ENCODE measurements at regions of chr11 and their contacts with region 1.

Region 1: GRCh38 chr11:13210424-13210823 is 67.2 kb upstream of the BMAL1 start:
- DNase-seq: peak; percentile 72
- H3K4me3 Mint-ChIP-seq: no peak overlapping the region
- H3K27ac Mint-ChIP-seq: no peak overlapping the region
- H3K4me1 Mint-ChIP-seq: peaks cover 32% of the 10 kb centered on the region
- H3K27me3 Mint-ChIP-seq: peaks cover 6% of the 10 kb centered on the region

Region 2: DNA sequence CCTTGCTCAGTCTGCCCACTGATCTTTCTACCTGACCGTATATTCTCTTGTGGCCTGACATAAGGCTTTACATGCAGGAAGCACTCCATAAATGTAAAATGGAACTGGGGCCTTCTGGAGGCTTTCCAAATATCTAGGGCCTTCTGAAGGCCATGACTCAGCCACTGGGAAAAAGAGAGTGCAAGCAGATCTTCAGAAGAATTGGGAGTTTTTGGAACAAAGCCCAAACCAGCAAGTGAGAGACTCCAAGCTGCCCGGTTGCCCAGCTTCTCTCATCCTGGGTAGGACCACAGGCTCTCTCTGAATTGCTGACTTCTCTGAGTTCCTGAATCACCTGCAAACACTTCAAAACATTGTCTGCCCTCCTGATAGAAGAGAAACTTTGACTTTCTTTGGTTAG is 40.7 kb before region 1 on chr11:
- intact Hi-C with region 1: no loop called
- DNase-seq: no peak
- H3K4me3 Mint-ChIP-seq: no peak overlapping the region
- H3K27ac Mint-ChIP-seq: no peak overlapping the region
- H3K4me1 Mint-ChIP-seq: no peaks in the 10 kb centered on the region
- H3K27me3 Mint-ChIP-seq: peaks cover 15% of the 10 kb centered on the region

Region 3: GRCh38 chr11:13183094-13183825 is 27.2 kb before region 1 on chr11:
- intact Hi-C with region 1: loop called (anchors 1 kb)
- DNase-seq: peak; percentile 63
- H3K4me3 Mint-ChIP-seq: peak overlapping the region; percentile 21
- H3K27ac Mint-ChIP-seq: no peak overlapping the region
- H3K4me1 Mint-ChIP-seq: peaks cover 9% of the 10 kb centered on the region
- H3K27me3 Mint-ChIP-seq: peaks cover 14% of the 10 kb centered on the region

Region 4: DNA sequence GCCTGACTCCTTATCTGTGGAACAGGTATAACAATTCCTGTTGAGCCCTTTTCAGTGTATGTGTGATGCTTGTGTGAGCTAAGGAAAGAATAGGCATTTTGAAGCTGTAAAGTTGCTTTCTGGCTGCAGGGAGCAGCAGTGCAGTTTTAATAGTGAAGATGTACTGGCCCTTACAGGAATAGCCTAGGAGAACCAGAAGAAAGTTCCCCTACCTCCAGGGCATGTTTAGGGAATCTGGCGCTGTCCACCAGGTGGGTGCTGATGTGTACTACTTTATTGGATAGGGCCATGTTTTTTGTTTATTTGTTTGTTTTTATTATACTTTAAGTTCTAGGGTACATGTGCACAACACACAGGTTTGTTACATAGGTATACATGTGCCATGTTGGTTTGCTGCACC is 78.7 kb after region 1 on chr11:
- intact Hi-C with region 1: loop called (anchors 1 kb)
- DNase-seq: no peak
- H3K4me3 Mint-ChIP-seq: no peak overlapping the region
- H3K27ac Mint-ChIP-seq: peak overlapping the region; percentile 91
- H3K4me1 Mint-ChIP-seq: peaks cover 58% of the 10 kb centered on the region
- H3K27me3 Mint-ChIP-seq: no peaks in the 10 kb centered on the region

Region 5: DNA sequence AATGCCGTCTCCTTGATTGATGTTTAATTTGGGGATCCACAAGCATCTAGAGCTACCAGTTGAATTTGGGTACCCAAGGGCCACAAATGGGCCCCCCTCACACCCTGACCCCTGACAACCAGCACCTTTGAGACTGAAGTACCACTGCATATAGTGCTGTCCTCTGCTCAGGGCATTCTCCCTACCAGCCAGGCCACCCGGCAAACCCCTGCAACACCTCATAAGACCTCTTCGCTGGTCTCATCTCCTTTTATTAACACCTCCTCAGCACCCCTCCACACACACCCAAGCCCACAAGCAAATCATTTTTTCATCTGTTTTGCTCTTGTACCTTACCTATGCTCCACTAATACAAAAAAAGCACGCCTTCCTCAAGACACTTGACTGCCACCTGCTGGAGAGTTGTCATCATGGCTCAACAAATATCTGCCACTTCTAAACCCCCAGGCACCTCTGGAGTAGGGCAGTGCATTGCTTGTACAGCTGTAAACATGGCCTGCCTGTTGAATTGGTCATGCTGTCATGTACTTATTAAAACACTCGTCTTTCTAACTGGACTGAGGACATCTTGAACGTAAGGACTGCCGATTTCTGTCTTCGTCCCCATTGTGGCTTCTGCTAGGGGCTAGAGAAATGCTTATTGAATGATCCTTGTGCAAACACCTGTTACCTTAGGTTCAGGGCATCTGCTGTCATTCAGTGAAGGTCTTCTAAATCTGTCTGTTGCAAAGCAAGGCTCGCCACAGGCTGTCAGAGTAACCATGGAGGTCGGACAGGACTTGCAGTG is 133.7 kb after region 1 on chr11:
- intact Hi-C with region 1: loop called (anchors 1 kb)
- DNase-seq: peak; percentile 92
- H3K4me3 Mint-ChIP-seq: no peak overlapping the region
- H3K27ac Mint-ChIP-seq: no peak overlapping the region
- H3K4me1 Mint-ChIP-seq: peaks cover 28% of the 10 kb centered on the region
- H3K27me3 Mint-ChIP-seq: no peaks in the 10 kb centered on the region

Region 6: GRCh38 chr11:13668102-13668956 is 457.9 kb after region 1 on chr11 and contains the start of gene FAR1:
- intact Hi-C with region 1: loop called (anchors 2 kb)
- DNase-seq: peak; percentile 99
- H3K4me3 Mint-ChIP-seq: peak within 1 kb of the TSS; percentile 98
- H3K27ac Mint-ChIP-seq: peak within 1 kb of the TSS; percentile 97
- H3K4me1 Mint-ChIP-seq: peaks cover 36% of the 10 kb centered on the region
- H3K27me3 Mint-ChIP-seq: peaks cover 10% of the 10 kb centered on the region
- total RNA-seq, gene FAR1: 55.7 and 58.2 TPM in 2 replicates

Measured in activated CD4-positive, alpha-beta T cell treated with anti-CD3 and anti-CD28 coated beads, Interleukin-2, amount 10 ng/mL, durations not matched to agents 24 days and 14 days (primary cell).